Activated T-helper 2 cell treated with anti-CD3 and anti-CD28 coated beads, Interferon-gamma antibody, Interleukin-2, Interleukin-4, amounts not matched to agents 10 μg/mL and 5 μg/mL and 100 μg/mL, durations not matched to agents 14 hours and 24 hours and 36 hours (primary cell): ENCODE measurements at regions of chr16 and their contacts with region 1.

Region 1: DNA sequence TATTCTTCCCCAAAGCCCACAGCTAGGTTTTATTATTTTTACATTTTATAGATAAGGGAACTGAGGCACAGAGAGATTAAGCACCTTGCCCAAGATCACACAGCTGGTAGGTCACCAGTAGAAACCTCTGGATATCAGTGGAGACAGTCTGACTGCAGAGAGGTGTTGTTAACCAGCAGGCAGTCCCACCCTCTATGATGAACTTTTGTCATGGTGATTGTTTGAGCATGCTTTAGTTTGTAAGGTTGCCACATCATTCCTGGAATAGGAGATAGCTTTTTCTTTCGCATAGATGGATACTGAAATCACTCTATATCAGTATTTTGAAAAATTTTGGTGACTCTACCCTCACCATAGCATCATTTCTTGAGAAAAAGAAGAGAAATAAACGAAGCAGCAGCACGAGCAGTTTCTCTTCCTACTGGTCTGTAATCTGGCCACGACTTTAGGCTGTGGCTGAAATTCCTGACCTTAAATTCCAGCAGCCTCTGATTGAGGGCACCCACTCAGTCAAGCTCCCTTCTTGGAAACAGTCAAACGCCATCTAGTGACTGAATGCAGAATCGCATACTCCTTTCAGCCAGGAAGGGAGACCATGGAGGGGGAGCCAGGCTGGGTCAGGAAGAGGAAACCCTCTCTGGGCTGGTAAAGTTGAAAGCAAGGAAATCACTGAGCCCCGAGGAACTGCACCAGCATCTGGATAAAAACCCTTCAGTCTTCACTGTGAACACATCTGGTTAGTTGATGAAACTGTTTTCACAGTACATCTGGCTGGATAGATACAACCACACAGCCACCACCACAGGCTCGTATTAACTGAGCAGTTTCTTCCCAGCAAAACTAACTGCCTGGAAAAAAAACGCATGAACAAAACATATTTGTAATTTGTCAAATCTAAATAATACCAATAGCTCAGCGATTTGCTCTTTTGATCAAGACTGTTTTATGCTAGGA is 108.4 kb upstream of the XYLT1 start:
- DNase-seq: peak; percentile 30
- H3K4me3 Mint-ChIP-seq: no peak overlapping the region
- H3K27ac Mint-ChIP-seq: peak overlapping the region; percentile 43
- H3K4me1 Mint-ChIP-seq: peaks cover 9% of the 10 kb centered on the region
- H3K27me3 Mint-ChIP-seq: peaks cover 3% of the 10 kb centered on the region

Region 2: GRCh38 chr16:17301593-17302135 is 277.5 kb before region 1 on chr16:
- intact Hi-C with region 1: no loop called
- DNase-seq: no peak
- H3K4me3 Mint-ChIP-seq: no peak overlapping the region
- H3K27ac Mint-ChIP-seq: no peak overlapping the region
- H3K4me1 Mint-ChIP-seq: peaks cover 40% of the 10 kb centered on the region
- H3K27me3 Mint-ChIP-seq: no peaks in the 10 kb centered on the region

Region 3: GRCh38 chr16:17544785-17545184 is 34.4 kb before region 1 on chr16:
- intact Hi-C with region 1: no loop called
- DNase-seq: no peak
- H3K4me3 Mint-ChIP-seq: no peak overlapping the region
- H3K27ac Mint-ChIP-seq: no peak overlapping the region
- H3K4me1 Mint-ChIP-seq: no peaks in the 10 kb centered on the region
- H3K27me3 Mint-ChIP-seq: peaks cover 2% of the 10 kb centered on the region

Region 4: GRCh38 chr16:17590719-17591654 is 11.8 kb after region 1 on chr16:
- intact Hi-C with region 1: loop called (anchors 1 kb)
- DNase-seq: peak; percentile 68
- H3K4me3 Mint-ChIP-seq: peak overlapping the region; percentile 34
- H3K27ac Mint-ChIP-seq: peak overlapping the region; percentile 97
- H3K4me1 Mint-ChIP-seq: peaks cover 27% of the 10 kb centered on the region
- H3K27me3 Mint-ChIP-seq: no peaks in the 10 kb centered on the region